Caki2 (cell line): ENCODE measurements at regions of chr2 and their contacts with region 1.

Region 1: DNA sequence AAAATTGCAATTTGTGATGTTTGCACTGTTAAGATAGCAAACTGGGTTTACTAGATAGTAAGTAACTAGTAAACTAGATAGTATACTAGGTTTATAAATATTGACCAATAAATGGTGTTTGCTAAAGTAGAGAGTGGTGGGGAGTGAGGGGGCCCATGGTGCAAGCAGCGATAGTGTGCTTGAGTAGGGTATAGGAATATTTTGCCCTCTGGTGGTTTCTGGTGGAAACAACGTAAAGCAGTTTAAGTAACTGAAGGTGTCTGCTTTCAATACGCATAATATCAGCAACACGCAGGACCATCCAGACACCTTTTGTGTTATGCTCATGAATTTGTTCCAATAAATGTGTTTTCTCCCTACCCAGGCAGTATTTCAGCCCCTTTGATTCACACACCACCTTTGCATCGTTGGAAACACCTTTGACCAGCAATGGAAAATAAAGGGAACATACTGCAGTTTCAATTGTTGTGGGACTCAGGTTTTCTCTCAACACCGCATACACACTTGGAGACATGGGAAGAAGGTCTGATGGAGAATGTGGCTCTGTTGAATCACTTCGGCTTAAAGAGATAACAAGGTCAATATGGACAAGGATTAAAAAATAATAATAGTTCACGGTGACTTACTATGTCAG is 16.7 kb upstream of the STAT1 start:
- DNase-seq: no peak

Region 2: DNA sequence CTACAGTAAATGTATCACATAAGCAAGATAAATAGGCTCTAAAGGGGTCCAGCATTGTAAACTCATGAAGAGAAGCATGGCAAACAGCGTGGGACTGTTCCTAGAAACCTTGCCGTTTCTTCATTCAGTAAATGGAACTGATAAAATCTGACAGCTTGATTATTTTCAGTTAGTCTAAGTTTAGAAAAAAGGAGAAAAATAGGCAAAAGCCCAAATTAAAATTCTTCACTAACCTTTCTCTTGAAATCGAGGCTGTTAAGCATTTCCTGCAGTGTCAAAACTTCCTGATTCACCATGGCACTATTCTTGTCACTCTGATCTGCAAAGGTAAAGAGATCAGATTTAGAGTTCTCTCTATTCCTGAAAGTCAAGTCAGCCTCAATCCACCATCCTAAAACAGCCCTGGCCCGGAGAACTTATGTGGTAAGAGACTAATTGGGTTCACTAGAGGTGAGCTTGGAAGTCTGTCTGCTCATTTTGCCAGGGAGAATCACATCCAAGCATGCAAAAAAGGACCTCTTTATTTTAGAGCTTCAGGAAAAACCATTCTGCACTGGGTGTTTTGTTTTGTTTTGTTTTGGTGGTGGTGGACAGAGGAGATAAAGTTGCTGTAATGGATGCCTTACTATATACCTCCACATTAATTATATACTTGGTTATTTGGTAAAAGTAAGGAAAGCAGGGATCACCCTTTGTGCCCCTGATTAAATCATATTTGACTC is 35.7 kb after region 1 on chr2:
- in situ Hi-C with region 1: no loop called
- DNase-seq: no peak

Region 3: GRCh38 chr2:191165176-191165643 is 134.6 kb after region 1 on chr2:
- in situ Hi-C with region 1: loop called (anchors 25 kb)
- DNase-seq: peak; percentile 67

Region 4: GRCh38 chr2:191231995-191232394 is 201.4 kb after region 1 on chr2:
- in situ Hi-C with region 1: no loop called
- DNase-seq: peak; percentile 34